Activated CD8-positive, alpha-beta memory T cell treated with anti-CD3 and anti-CD28 coated beads, Interleukin-2, amount 10 ng/mL, durations not matched to agents 7 days and 5 days (primary cell): ENCODE measurements at regions of chr1 and their contacts with region 1.

Region 1: DNA sequence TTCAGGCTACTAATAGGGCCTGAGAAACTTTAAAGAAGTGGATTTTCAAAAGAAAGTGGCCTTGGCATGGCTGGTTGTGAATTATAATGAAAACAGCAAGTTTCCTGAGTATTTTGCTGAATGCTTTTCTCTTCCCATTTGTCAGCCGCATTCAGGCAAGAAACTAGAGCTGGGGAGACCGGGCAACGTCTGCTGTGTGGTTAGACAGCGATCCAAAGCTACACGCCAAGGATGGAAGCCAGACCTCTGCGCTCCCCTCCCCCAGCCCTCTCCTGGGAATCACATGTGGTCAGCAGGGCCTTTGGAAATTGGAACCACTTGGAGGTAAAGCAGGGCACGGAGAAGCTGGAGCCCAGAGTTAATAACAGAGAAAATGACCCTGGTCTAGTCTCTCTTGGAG is 114.1 kb upstream of the CD34 start:
- DNase-seq: no peak
- ATAC-seq: no peak
- H3K4me3 Mint-ChIP-seq: no peak overlapping the region
- H3K27ac Mint-ChIP-seq: no peak overlapping the region
- H3K4me1 Mint-ChIP-seq: no peaks in the 10 kb centered on the region
- H3K27me3 Mint-ChIP-seq: peaks cover 3% of the 10 kb centered on the region

Region 2: GRCh38 chr1:208085655-208086515 is 60.9 kb after region 1 on chr1:
- CTCF ChIA-PET with region 1: interaction called, 64 read pairs
- DNase-seq: no peak
- ATAC-seq: no peak
- H3K4me3 Mint-ChIP-seq: peak overlapping the region; percentile 62
- H3K27ac Mint-ChIP-seq: peak overlapping the region; percentile 71
- H3K4me1 Mint-ChIP-seq: peaks cover 13% of the 10 kb centered on the region
- H3K27me3 Mint-ChIP-seq: no peaks in the 10 kb centered on the region

Region 3: DNA sequence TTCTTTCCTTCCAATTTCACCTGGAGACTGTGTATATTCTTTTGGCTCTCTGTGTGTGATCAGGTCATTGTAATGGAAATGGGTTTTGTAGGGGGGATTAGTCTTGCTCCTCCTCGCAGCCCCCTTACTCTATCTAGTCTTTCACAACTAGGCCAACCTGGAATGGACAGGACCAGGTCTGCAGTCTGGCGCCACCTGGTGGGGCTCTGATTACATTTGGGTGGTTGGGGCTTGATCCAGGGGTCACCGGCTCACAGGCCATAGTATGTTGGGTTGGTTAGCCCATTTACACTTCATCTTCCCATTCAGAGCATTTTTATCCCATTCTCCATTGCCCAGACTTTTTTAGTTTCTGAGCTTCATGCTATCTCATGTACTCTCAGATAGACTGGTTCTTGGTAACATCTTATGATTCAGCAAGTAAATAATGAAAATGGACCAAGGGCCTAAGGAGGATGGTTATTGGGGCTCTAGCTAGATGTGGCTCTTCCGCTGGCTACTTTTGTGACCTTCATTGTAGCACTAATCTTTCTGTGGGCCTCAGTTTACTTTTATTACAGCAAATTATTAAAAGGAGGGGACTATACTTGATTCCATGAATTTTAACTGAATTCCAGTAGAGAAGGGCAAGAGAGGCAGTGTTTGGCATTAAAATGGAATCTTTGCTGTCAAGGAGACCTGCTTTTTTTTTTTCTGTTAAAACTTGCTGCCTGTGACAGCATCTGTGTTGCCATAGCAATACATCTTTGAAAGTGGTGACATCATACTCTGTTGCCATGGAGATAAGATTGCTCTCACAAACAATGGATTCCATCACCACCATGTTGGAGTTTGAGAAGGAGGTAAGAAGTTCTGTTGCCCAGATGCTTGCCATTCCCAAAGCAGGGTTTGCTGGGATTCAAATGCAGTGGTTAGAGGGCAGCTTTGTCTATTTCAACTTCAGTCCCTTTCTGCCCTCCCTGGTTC is 69.0 kb after region 1 on chr1:
- CTCF ChIA-PET with region 1: interaction called, 64 read pairs
- DNase-seq: peak; percentile 70
- ATAC-seq: peak; percentile 70
- H3K4me3 Mint-ChIP-seq: no peak overlapping the region
- H3K27ac Mint-ChIP-seq: no peak overlapping the region
- H3K4me1 Mint-ChIP-seq: no peaks in the 10 kb centered on the region
- H3K27me3 Mint-ChIP-seq: no peaks in the 10 kb centered on the region

Region 4: DNA sequence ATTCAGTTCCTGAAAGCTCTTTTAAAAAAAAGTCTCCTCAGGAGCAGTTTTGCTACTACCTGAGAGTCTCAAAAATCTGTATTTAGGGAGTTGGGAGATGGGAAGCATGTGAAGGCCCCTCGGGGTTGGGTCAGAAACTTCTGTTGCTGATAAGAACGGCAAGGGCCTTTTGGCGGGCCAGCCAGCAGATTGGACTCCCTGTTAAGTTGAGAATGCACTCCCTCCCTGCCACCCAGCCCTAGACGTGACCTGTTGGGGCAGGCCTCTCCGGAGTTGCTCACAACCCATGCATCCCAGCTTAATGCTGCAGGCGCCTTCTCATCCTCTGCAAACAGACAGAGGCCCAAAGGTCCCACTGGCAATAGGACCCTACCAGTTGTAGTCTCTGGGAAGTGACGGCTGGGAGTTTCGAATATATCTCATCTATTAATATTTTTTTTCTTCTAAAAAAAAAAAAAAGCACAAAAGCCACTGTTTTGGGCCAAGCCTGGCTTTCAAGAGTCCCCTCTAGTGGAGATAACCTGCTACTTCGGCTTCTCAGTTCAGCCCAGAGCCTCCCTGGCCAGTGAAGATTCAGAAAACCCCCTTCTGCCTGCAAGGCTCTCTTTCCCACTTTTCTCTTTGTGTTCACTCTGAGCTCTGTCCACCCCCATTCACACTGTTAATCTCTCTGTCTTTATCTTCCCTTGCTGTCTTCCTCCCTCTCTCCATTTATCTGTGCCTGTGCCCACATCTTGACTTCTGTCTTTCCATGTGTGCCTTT is 213.9 kb after region 1 on chr1:
- CTCF ChIA-PET with region 1: interaction called, 42 read pairs
- DNase-seq: no peak
- ATAC-seq: peak; percentile 42
- H3K4me3 Mint-ChIP-seq: no peak overlapping the region
- H3K27ac Mint-ChIP-seq: no peak overlapping the region
- H3K4me1 Mint-ChIP-seq: peaks cover 17% of the 10 kb centered on the region
- H3K27me3 Mint-ChIP-seq: peaks cover 71% of the 10 kb centered on the region

Region 5: DNA sequence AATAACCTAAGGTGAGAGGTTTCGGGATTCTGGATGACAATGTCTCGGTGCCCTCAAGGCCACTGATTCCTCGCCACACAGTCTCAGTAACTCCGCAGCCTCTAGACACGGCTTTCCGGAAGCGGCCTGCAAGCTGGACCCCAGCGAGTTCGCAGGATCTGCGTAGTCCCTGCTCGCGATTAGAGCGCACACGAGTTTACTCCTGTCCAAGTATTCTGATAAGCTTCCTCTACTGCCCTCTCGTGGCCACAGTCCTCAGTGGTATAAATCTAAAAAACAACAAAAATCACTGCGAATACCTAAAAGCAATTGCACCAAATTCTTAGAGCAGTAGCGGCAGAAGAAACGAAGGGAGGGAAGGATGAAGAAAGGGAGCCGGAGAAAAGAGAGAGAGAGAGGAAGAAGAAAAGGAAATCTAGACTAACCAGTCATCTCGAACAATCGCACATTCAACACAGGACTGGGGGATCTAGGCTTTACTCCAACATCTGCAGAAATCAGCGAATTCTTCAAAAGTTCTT is 220.2 kb after region 1 on chr1:
- CTCF ChIA-PET with region 1: interaction called, 42 read pairs
- DNase-seq: peak; percentile 88
- ATAC-seq: peak; percentile 73
- H3K4me3 Mint-ChIP-seq: peak overlapping the region; percentile 39
- H3K27ac Mint-ChIP-seq: no peak overlapping the region
- H3K4me1 Mint-ChIP-seq: peaks cover 12% of the 10 kb centered on the region
- H3K27me3 Mint-ChIP-seq: peaks cover 58% of the 10 kb centered on the region